ENCODE measurements at regions of chr4 and their contacts with region 1.

Region 1: GRCh38 chr4:15002659-15003400 is 549 bp downstream of the CPEB2 start:
- DNase-seq: no peak
- ATAC-seq: peak; percentile 64
- H3K4me3 ChIP-seq: peak overlapping the region; percentile 72 to 79
- H3K27ac ChIP-seq: peak overlapping the region; percentile 65; the same call in 1 of the 2 replicates
- H3K4me1 ChIP-seq: no peaks in the 10 kb centered on the region
- H3K27me3 ChIP-seq: no peaks in the 10 kb centered on the region
- CTCF ChIP-seq: no peak

Region 2: DNA sequence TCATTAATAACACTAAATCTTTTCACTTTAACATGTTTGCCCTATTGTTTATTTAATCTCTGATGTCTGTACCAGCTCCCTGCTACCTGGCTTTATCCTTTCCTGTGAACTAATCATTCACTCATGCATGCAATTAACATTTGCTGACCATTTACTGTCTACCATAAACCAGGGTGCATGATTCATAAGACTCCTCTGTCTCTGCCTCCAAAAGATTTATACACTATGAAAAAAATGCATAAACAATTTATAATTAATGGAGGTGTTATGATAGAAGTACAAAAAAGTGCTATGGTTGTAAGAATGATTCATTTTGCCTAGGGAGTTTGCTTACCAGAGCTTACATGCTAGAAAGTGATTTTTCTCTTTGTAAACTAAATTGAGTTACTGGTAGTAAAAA is 25.0 kb before region 1 on chr4:
- CTCF ChIA-PET with region 1: no interaction called
- POLR2A ChIA-PET with region 1: no interaction called
- in situ Hi-C with region 1: no loop called
- intact Hi-C with region 1: no loop called
- DNase-seq: no peak
- ATAC-seq: no peak
- H3K4me3 ChIP-seq: no peak overlapping the region
- H3K27ac ChIP-seq: no peak overlapping the region
- H3K4me1 ChIP-seq: no peaks in the 10 kb centered on the region
- H3K27me3 ChIP-seq: no peaks in the 10 kb centered on the region
- CTCF ChIP-seq: no peak

Region 3: GRCh38 chr4:15020502-15021286 is 17.9 kb after region 1 on chr4:
- CTCF ChIA-PET with region 1: no interaction called
- POLR2A ChIA-PET with region 1: interaction called, 11 read pairs
- in situ Hi-C with region 1: no loop called
- intact Hi-C with region 1: no loop called
- DNase-seq: no peak
- ATAC-seq: no peak
- H3K4me3 ChIP-seq: no peak overlapping the region
- H3K27ac ChIP-seq: no peak overlapping the region
- H3K4me1 ChIP-seq: no peaks in the 10 kb centered on the region
- H3K27me3 ChIP-seq: no peaks in the 10 kb centered on the region
- CTCF ChIP-seq: no peak

Region 4: DNA sequence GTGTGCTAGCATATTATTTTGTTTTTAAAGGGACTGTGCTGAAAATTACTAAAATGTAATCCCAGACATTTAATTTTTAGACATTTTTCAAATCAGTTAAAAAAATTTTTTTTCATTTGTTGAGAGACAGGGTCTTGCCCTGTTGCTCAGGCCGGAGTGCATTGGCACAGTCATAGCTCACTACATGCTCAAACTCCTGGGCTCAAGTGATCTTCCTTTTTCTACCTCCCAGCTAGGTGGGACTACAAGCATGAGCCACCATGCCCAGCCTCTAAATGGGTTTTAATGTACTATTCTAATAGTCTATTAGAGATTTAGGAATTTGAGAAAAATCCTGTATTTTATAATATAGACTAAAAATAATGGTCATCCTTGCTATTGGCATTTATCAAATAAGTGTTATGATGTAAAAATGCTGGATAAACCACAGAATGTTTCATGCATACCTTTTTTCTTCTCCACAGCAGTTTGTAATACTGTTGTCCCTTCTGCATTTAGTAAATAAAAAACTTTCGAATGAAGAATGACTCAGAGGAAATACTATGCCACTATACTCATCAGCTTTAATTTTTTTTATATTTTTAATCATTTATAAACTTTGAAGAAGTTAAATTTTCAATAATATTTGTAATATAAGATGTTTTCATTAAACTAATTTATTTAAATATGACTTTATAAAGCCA is 29.3 kb after region 1 on chr4:
- CTCF ChIA-PET with region 1: no interaction called
- POLR2A ChIA-PET with region 1: interaction called, 11 read pairs
- in situ Hi-C with region 1: no loop called
- intact Hi-C with region 1: no loop called
- DNase-seq: peak; percentile 24
- ATAC-seq: no peak
- H3K4me3 ChIP-seq: no peak overlapping the region
- H3K27ac ChIP-seq: no peak overlapping the region
- H3K4me1 ChIP-seq: no peaks in the 10 kb centered on the region
- H3K27me3 ChIP-seq: no peaks in the 10 kb centered on the region
- CTCF ChIP-seq: no peak

Measured in Panc1 (cell line).